ENCODE measurements at regions of chr7 and their contacts with region 1.

Region 1: DNA sequence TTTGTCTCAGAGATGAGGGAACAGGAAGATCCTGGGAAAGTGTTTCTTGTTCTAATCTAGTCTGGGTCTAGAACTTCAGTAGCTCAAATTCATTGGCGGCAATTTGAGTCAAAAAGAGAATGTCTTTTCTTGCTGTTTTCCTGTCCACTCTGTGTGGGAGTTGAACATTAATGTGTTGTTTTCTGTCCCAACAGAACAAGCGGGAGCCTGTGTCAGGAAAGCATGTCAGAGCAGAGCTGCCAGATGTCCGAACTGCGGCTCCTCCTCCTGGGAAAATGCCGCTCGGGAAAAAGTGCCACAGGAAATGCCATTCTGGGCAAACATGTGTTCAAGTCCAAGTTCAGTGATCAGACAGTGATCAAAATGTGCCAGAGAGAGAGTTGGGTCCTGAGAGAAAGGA is 16.0 kb downstream of the GIMAP8 start:
- DNase-seq: no peak
- ATAC-seq: no peak
- H3K4me3 ChIP-seq: peak overlapping the region; percentile 41
- H3K27ac ChIP-seq: no peak overlapping the region
- H3K4me1 ChIP-seq: no peaks in the 10 kb centered on the region
- H3K27me3 ChIP-seq: no peaks in the 10 kb centered on the region
- CTCF ChIP-seq: no peak

Region 2: GRCh38 chr7:150514748-150515222 is 48.3 kb after region 1 on chr7 and contains the start of gene GIMAP7:
- intact Hi-C with region 1: loop called (anchors 10 kb)
- DNase-seq: no peak
- ATAC-seq: peak; percentile 78
- H3K4me3 ChIP-seq: peak within 1 kb of the TSS; percentile 61
- H3K27ac ChIP-seq: peak within 1 kb of the TSS; percentile 88
- H3K4me1 ChIP-seq: peaks cover 5% of the 10 kb centered on the region
- H3K27me3 ChIP-seq: no peaks in the 10 kb centered on the region
- CTCF ChIP-seq: no peak
- total RNA-seq, gene GIMAP7: 47.0 TPM

Region 3: DNA sequence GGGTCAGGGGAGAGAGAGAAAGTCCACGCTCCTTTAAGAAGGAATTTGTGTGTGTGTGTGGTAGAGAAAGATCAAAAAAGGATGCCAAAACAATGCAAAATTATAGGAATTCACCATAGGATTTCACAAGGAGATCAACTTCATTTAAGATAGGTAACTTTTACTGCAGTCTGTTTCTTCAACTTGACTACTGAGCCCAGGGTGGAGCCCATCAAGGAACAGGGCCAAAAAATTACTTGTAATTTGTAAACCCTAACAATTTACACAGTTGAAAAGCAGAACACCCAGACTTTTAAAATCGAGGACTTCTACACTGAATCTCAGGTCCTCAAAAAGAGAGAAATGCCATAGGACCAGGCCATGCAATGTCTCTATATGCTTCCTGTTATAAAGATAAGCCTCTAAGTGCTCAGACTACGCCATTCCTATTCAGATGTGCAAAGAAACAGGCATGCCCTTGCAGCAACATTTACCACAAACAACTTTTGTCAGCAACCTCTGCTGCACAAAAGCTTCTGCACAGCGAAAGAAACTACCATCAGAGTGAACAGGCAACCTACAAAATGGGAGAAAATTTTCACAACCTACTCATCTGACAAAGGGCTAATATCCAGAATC is 90.2 kb after region 1 on chr7:
- intact Hi-C with region 1: no loop called
- DNase-seq: no peak
- ATAC-seq: peak; percentile 86
- H3K4me3 ChIP-seq: no peak overlapping the region
- H3K27ac ChIP-seq: peak overlapping the region; percentile 20
- H3K4me1 ChIP-seq: no peaks in the 10 kb centered on the region
- H3K27me3 ChIP-seq: no peaks in the 10 kb centered on the region
- CTCF ChIP-seq: no peak

Region 4: GRCh38 chr7:151769188-151769841 is 1302.8 kb after region 1 on chr7:
- intact Hi-C with region 1: no loop called
- DNase-seq: peak; percentile 48
- ATAC-seq: no peak
- H3K4me3 ChIP-seq: no peak overlapping the region
- H3K27ac ChIP-seq: no peak overlapping the region
- H3K4me1 ChIP-seq: no peaks in the 10 kb centered on the region
- H3K27me3 ChIP-seq: no peaks in the 10 kb centered on the region
- CTCF ChIP-seq: no peak

Measured in upper lobe of right lung (tissue), 1 donor.